ENCODE measurements at regions of chr5 and their contacts with region 1.

Region 1: GRCh38 chr5:83430130-83431010 is 41.2 kb upstream of the VCAN start:
- DNase-seq: peak; percentile 55 to 86
- H3K4me3 ChIP-seq: no peak overlapping the region
- H3K27ac ChIP-seq: no peak overlapping the region
- H3K4me1 ChIP-seq: peaks cover 0 to 18% (median 1%) of the 10 kb centered on the region in 4 donors
- H3K27me3 ChIP-seq: peaks cover 0 to 10% (median 0%) of the 10 kb centered on the region in 3 donors
- CTCF ChIP-seq: peak in 5 of 7 experiments; percentile 41 to 80 (median 46)
- EP300 ChIP-seq: no peak
- POLR2A ChIP-seq: no peak

Region 2: GRCh38 chr5:82641331-82642003 is 788.9 kb before region 1 on chr5:
- intact Hi-C with region 1: loop called (anchors 10 kb)
- DNase-seq: peak; percentile 76 to 94
- H3K4me3 ChIP-seq: no peak overlapping the region
- H3K27ac ChIP-seq: no peak overlapping the region
- H3K4me1 ChIP-seq: peaks cover 0 to 17% (median 5%) of the 10 kb centered on the region in 4 donors
- H3K27me3 ChIP-seq: no peaks in the 10 kb centered on the region
- CTCF ChIP-seq: peak in 5 of 7 experiments; percentile 48 to 63 (median 51)
- EP300 ChIP-seq: no peak
- POLR2A ChIP-seq: no peak

Region 3: GRCh38 chr5:83104021-83104420 is 326.3 kb before region 1 on chr5:
- intact Hi-C with region 1: no loop called
- DNase-seq: no peak
- H3K4me3 ChIP-seq: no peak overlapping the region
- H3K27ac ChIP-seq: no peak overlapping the region
- H3K4me1 ChIP-seq: no peaks in the 10 kb centered on the region
- H3K27me3 ChIP-seq: no peaks in the 10 kb centered on the region
- CTCF ChIP-seq: no peak
- EP300 ChIP-seq: no peak
- POLR2A ChIP-seq: no peak